ENCODE measurements at regions of chr9 and their contacts with region 1.

Region 1: GRCh38 chr9:113492343-113493212 is 29.1 kb downstream of the RGS3 start:
- DNase-seq: peak; percentile 69
- ATAC-seq: peak; percentile 47 to 65

Region 2: GRCh38 chr9:113454914-113455761 is 37.4 kb before region 1 on chr9:
- intact Hi-C with region 1: loop called in 1 of 2 experiments (anchors 5 kb)
- DNase-seq: peak; percentile 74
- ATAC-seq: peak; percentile 92 to 98

Measured in left cardiac atrium (tissue), 4 donors.